ENCODE measurements at regions of chr3 and their contacts with region 1.

Region 1: DNA sequence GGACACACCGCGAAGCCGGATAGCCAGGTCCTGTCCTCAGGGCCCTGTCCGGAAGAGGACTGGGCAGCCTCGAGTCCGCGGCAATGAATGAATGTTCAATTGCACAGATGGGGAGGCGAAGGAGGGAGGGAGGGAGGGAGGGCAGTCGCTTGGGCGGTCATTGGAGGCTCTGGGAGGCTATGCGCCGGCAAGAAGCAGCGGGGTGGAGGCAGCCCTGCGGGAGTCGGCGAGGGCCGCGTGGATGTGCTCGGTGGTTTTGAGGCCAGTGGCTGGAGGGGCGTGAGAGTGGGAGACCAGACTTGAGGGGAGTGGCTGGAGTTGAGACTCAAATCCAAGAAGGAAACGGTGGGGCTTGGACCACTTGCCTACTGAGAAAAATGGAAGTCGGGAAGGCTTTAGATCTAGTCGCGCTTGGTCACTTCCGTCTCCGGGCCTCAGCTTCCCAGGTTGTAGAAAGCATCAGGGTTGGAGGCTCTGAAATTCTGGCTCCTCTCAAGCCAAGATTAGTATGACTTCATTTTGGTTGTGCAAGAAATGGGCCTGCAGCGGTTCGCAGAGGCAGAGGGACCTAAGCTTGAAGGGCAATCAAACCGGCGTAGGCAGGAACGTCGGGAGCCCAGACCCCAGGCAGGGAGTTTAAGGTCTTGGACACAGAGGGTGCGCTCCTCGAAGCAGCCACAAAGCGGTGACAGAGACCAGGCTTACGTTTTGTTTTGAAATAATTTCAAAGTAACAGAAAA is 21.1 kb upstream of the PLXND1 start:
- DNase-seq: peak; percentile 73
- H3K4me3 ChIP-seq: peak overlapping the region; percentile 39
- H3K27ac ChIP-seq: peak overlapping the region; percentile 85
- H3K27me3 ChIP-seq: no peaks in the 10 kb centered on the region
- CTCF ChIP-seq: peak; percentile 88

Region 2: GRCh38 chr3:129824926-129825541 is 197.4 kb after region 1 on chr3:
- in situ Hi-C with region 1: loop called (anchors 25 kb)
- DNase-seq: no peak
- H3K4me3 ChIP-seq: no peak overlapping the region
- H3K27ac ChIP-seq: no peak overlapping the region
- H3K27me3 ChIP-seq: no peaks in the 10 kb centered on the region
- CTCF ChIP-seq: peak; percentile 70

Measured in brain microvascular endothelial cell (primary cell).